ENCODE measurements at regions of chr3 and their contacts with region 1.

Region 1: DNA sequence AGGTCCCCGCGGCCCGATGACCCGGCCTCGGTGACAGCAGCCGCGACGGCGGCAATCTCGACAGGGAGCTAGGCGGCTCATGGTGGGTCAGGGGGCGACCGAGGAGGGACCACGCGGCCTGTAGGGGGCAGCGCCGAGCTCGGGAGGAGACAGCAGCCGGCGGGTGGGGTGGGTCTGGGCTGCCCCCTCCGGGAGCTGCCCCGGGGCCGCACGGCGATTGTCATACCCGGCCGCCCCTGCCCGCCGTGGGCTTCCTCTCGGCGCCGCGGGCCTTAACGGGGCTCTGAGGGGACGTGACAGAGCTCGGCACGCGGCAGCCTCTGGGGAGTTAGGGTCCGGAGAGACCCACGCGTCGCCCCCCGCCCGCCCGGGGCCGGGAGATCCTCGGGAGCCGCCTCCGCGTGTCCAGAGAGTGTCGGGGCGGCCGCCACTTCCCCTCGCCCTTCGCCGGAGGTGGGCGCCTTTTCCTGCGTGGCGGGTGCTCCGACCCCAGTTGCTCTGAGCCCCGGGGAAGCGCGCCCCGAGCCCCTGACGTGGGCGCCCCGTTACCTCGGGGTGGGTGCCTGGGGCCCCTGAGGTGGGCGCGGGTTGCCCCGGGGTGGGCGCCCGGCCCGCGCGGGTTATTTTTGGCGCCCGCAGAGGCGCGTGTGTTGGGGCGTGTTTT is 539 bp upstream of the PLCL2 start:
- DNase-seq: peak in 2 of 3 donors; percentile 46 to 56
- H3K4me3 ChIP-seq: peak overlapping the region; percentile 58 to 96 (median 92)
- H3K4me3 Mint-ChIP-seq: peak overlapping the region; percentile 88 to 90
- H3K27ac ChIP-seq: peak overlapping the region; percentile 84 to 94
- H3K27ac Mint-ChIP-seq: peak overlapping the region; percentile 85 to 97 (median 94)
- H3K4me1 ChIP-seq: peaks cover 35 to 52% of the 10 kb centered on the region in 2 donors
- H3K4me1 Mint-ChIP-seq: peaks cover 61% of the 10 kb centered on the region
- H3K27me3 ChIP-seq: no peaks in the 10 kb centered on the region
- H3K27me3 Mint-ChIP-seq: no peaks in the 10 kb centered on the region
- CTCF ChIP-seq: peak; percentile 60

Region 2: DNA sequence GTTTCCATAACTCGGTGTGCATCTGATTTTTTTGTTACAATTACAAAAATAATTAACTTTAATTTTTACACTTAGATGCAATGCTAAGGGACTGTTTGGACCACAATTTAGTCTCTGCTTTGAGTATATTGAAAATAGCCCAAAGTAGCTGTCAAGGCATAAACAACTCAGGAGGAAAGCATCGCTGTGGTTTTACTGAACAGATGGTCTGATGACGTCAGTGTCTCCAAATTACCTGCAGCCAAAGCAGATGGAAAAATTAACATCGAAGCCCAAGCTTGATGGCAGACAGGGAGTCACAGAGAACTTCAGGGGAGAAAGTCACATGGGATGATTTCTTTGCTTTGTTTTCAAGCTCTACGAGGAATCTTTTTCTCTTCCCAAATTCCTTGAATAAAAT is 82.5 kb before region 1 on chr3:
- intact Hi-C with region 1: loop called in 1 of 2 experiments (anchors 5 kb)
- DNase-seq: no peak
- H3K4me3 ChIP-seq: peak overlapping the region in 1 of 3 experiments; percentile 53
- H3K4me3 Mint-ChIP-seq: no peak overlapping the region
- H3K27ac ChIP-seq: peak overlapping the region in 1 of 2 donors; percentile 68
- H3K27ac Mint-ChIP-seq: peak overlapping the region; percentile 11 to 91 (median 80)
- H3K4me1 ChIP-seq: peaks cover 75 to 76% of the 10 kb centered on the region in 2 donors
- H3K4me1 Mint-ChIP-seq: peaks cover 82% of the 10 kb centered on the region
- H3K27me3 ChIP-seq: no peaks in the 10 kb centered on the region
- H3K27me3 Mint-ChIP-seq: peaks cover 0 to 3% (median 2%) of the 10 kb centered on the region in 3 donors
- CTCF ChIP-seq: no peak

Region 3: GRCh38 chr3:16842272-16843270 is 41.6 kb before region 1 on chr3:
- intact Hi-C with region 1: loop called (anchors 5 kb)
- DNase-seq: peak; percentile 79 to 90 (median 81)
- H3K4me3 ChIP-seq: peak overlapping the region in 1 of 3 experiments; percentile 76
- H3K4me3 Mint-ChIP-seq: peak overlapping the region; percentile 55 to 83
- H3K27ac ChIP-seq: peak overlapping the region; percentile 95 to 97
- H3K27ac Mint-ChIP-seq: peak overlapping the region; percentile 94 to 98 (median 98)
- H3K4me1 ChIP-seq: peaks cover 66 to 70% of the 10 kb centered on the region in 2 donors
- H3K4me1 Mint-ChIP-seq: peaks cover 72% of the 10 kb centered on the region
- H3K27me3 ChIP-seq: no peaks in the 10 kb centered on the region
- H3K27me3 Mint-ChIP-seq: peaks cover 0 to 2% (median 2%) of the 10 kb centered on the region in 3 donors
- CTCF ChIP-seq: no peak

Region 4: GRCh38 chr3:16849229-16849628 is 35.0 kb before region 1 on chr3:
- intact Hi-C with region 1: loop called (anchors 5 kb)
- DNase-seq: peak; percentile 67 to 77 (median 75)
- H3K4me3 ChIP-seq: peak overlapping the region; percentile 2 to 69 (median 56)
- H3K4me3 Mint-ChIP-seq: peak overlapping the region; percentile 45 to 68
- H3K27ac ChIP-seq: peak overlapping the region in 1 of 2 donors; percentile 81
- H3K27ac Mint-ChIP-seq: peak overlapping the region; percentile 89 to 97 (median 95)
- H3K4me1 ChIP-seq: peaks cover 65 to 66% of the 10 kb centered on the region in 2 donors
- H3K4me1 Mint-ChIP-seq: peaks cover 62% of the 10 kb centered on the region
- H3K27me3 ChIP-seq: no peaks in the 10 kb centered on the region
- H3K27me3 Mint-ChIP-seq: peaks cover 0 to 2% (median 0%) of the 10 kb centered on the region in 3 donors
- CTCF ChIP-seq: no peak